B cell (primary cell): ENCODE measurements at regions of chr9 and their contacts with region 1.

Region 1: GRCh38 chr9:72726947-72727346 is 205.5 kb downstream of the TMC1 start:
- DNase-seq: no peak
- ATAC-seq: no peak
- H3K4me3 ChIP-seq: no peak overlapping the region
- H3K4me3 Mint-ChIP-seq: no peak overlapping the region
- H3K27ac ChIP-seq: no peak overlapping the region
- H3K27ac Mint-ChIP-seq: no peak overlapping the region
- H3K4me1 ChIP-seq: no peaks in the 10 kb centered on the region
- H3K4me1 Mint-ChIP-seq: no peaks in the 10 kb centered on the region
- H3K27me3 ChIP-seq: no peaks in the 10 kb centered on the region
- H3K27me3 Mint-ChIP-seq: peaks cover 5% of the 10 kb centered on the region
- CTCF ChIP-seq: no peak

Region 2: GRCh38 chr9:72623156-72623555 is 103.8 kb before region 1 on chr9:
- CTCF ChIA-PET with region 1: no interaction called
- POLR2A ChIA-PET with region 1: no interaction called
- intact Hi-C with region 1: no loop called
- DNase-seq: no peak
- ATAC-seq: no peak
- H3K4me3 ChIP-seq: no peak overlapping the region
- H3K4me3 Mint-ChIP-seq: no peak overlapping the region
- H3K27ac ChIP-seq: no peak overlapping the region
- H3K27ac Mint-ChIP-seq: no peak overlapping the region
- H3K4me1 ChIP-seq: no peaks in the 10 kb centered on the region
- H3K4me1 Mint-ChIP-seq: no peaks in the 10 kb centered on the region
- H3K27me3 ChIP-seq: peaks cover 0 to 3% (median 0%) of the 10 kb centered on the region in 4 experiments
- H3K27me3 Mint-ChIP-seq: peaks cover 6% of the 10 kb centered on the region
- CTCF ChIP-seq: no peak

Region 3: GRCh38 chr9:72788966-72789735 is 62.2 kb after region 1 on chr9:
- CTCF ChIA-PET with region 1: no interaction called
- POLR2A ChIA-PET with region 1: no interaction called
- intact Hi-C with region 1: loop called (anchors 10 kb)
- DNase-seq: no peak
- ATAC-seq: no peak
- H3K4me3 ChIP-seq: no peak overlapping the region
- H3K4me3 Mint-ChIP-seq: no peak overlapping the region
- H3K27ac ChIP-seq: no peak overlapping the region
- H3K27ac Mint-ChIP-seq: no peak overlapping the region
- H3K4me1 ChIP-seq: no peaks in the 10 kb centered on the region
- H3K4me1 Mint-ChIP-seq: no peaks in the 10 kb centered on the region
- H3K27me3 ChIP-seq: no peaks in the 10 kb centered on the region
- H3K27me3 Mint-ChIP-seq: no peaks in the 10 kb centered on the region
- CTCF ChIP-seq: no peak

Region 4: DNA sequence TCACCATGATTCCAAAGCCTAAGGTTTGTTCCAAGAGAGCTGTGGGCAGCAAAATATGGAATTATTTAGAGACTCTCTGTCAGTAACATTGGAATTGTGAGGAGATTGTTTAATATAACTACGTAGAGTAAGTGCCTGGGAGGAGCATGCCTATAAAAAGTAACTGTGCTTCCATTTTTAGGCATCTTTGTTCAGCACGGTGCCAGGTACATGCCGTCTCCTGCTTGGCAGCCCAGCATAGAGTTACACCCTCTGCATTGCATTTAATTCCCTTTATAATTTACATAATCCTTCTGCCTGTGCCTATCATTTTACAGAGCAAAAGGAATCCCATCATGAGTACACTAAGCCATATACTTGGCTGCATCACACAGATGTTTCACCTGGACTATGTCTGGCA is 258.0 kb after region 1 on chr9:
- CTCF ChIA-PET with region 1: no interaction called
- POLR2A ChIA-PET with region 1: no interaction called
- intact Hi-C with region 1: no loop called
- DNase-seq: no peak
- ATAC-seq: no peak
- H3K4me3 ChIP-seq: no peak overlapping the region
- H3K4me3 Mint-ChIP-seq: no peak overlapping the region
- H3K27ac ChIP-seq: no peak overlapping the region
- H3K27ac Mint-ChIP-seq: no peak overlapping the region
- H3K4me1 ChIP-seq: no peaks in the 10 kb centered on the region
- H3K4me1 Mint-ChIP-seq: no peaks in the 10 kb centered on the region
- H3K27me3 ChIP-seq: no peaks in the 10 kb centered on the region
- H3K27me3 Mint-ChIP-seq: no peaks in the 10 kb centered on the region
- CTCF ChIP-seq: no peak